Gastrocnemius medialis (tissue), 4 donors: ENCODE measurements at regions of chr3 and their contacts with region 1.

Region 1: DNA sequence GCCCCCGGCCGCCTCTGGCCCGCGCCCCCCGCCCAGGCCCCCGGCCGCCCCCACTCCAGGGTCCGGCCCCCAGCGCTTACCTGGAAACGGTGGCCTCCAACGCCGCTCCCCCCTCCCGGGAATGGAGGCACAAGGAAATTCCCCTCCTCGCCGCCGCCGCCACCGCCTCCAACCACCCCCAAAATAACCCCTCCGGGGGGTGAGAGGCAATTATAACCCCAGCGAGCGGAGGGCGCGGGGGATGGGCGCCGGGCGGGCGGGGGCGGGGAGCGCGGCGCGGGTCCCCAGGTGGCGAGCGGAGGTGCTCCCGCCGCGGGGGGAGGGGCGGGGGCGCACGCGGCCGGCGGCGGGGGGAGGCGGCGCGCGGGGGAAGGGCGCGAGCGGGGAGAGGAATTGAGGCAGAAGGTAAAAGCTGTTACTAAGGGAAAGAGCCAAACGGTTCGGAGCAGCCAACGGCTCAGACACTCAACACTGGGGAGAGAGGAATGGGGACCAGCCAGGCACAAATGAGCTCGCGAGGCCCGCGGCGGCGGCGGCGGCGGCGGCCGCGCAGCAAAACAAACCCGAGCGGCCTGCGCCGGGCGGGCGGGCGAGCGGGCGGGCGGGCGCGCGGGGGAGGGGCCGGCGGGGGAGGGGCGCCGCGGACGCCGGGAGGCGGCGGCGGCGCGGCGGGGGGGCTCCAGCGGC is at the start of gene TBL1XR1:
- DNase-seq: peak; percentile 91 to 96
- ATAC-seq: peak; percentile 90 to 92
- H3K4me3 ChIP-seq: peak within 1 kb of the TSS; percentile 72 to 92 (median 84)
- H3K27ac ChIP-seq: peak within 1 kb of the TSS; percentile 94 to 98 (median 96)
- H3K4me1 ChIP-seq: peaks cover 17 to 20% of the 10 kb centered on the region in 2 donors
- H3K27me3 ChIP-seq: no peaks in the 10 kb centered on the region
- CTCF ChIP-seq: no peak
- POLR2A ChIP-seq: peak in 1 of 2 donors; percentile 30
- total RNA-seq, gene TBL1XR1: 35.9 to 77.8 (median 49.2) TPM

Region 2: DNA sequence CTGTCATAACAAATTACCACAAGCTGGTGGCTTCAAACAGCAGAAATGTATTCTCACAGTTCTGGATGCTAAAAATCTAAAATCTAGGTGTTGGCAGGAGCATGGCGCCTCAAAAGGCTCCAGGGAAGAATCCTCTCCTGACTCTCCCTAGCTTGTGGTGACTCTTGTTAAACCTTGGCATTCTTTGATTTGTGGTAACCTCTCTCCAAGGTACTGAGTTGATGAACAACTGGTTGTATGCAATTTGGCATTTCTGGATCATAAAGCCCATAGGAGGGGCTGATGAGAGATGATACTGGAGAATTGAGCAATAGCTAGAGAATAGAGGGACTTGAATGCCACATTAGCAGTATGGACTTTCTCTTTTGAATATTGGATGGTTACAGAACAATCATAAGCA is 821.7 kb before region 1 on chr3:
- in situ Hi-C with region 1: no loop called
- intact Hi-C with region 1: no loop called
- DNase-seq: no peak
- ATAC-seq: no peak
- H3K4me3 ChIP-seq: no peak overlapping the region
- H3K27ac ChIP-seq: no peak overlapping the region
- H3K4me1 ChIP-seq: no peaks in the 10 kb centered on the region
- H3K27me3 ChIP-seq: no peaks in the 10 kb centered on the region
- CTCF ChIP-seq: no peak
- POLR2A ChIP-seq: no peak

Region 3: DNA sequence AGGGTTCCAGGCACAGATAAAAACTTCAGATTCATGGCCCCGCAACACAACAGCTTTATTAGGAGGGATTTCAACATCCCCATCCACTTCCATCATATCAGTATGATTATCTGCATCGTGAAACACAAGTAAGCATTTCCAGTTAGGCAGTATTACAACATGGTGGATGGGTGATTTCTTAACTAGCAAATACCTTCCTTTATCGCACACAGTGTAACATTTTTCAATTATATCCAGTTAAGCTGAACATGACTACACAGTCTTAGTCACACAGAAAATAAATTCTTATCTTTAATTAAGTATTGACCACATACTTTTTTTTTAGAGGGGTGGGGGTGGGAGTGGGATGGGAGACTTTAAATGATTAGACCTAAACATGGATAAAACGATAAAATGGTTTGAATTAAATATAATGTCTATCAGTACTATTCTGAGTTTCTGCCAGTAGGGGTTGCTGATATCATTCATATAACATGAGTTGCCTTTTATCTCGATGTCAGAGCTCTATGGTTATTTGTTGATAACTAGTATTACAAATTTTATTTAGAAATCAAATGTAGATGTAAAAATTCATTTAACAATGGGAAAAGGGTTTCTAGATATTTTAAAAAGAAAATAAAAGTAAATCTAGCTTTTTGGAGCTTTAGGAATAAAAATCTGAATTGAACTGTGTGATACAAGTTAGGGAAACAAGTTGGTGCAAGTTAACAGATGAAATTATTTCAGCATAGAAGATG is 146.5 kb before region 1 on chr3:
- in situ Hi-C with region 1: loop called in 3 of 4 experiments (anchors 5 to 25 kb)
- intact Hi-C with region 1: loop called (anchors 5 kb)
- DNase-seq: no peak
- ATAC-seq: peak in 1 of 2 donors; percentile 84
- H3K4me3 ChIP-seq: no peak overlapping the region
- H3K27ac ChIP-seq: peak overlapping the region in 1 of 4 donors; percentile 3
- H3K4me1 ChIP-seq: peaks cover 6 to 11% of the 10 kb centered on the region in 2 donors
- H3K27me3 ChIP-seq: no peaks in the 10 kb centered on the region
- CTCF ChIP-seq: peak; percentile 50 to 71 (median 57)
- POLR2A ChIP-seq: no peak

Region 4: GRCh38 chr3:177294221-177294620 is 97.0 kb after region 1 on chr3:
- in situ Hi-C with region 1: no loop called
- intact Hi-C with region 1: loop called (anchors 2 kb)
- DNase-seq: peak; percentile 82 to 85
- ATAC-seq: peak; percentile 99 to 100
- H3K4me3 ChIP-seq: no peak overlapping the region
- H3K27ac ChIP-seq: peak overlapping the region; percentile 69 to 91 (median 80)
- H3K4me1 ChIP-seq: peaks cover 22 to 31% of the 10 kb centered on the region in 2 donors
- H3K27me3 ChIP-seq: no peaks in the 10 kb centered on the region
- CTCF ChIP-seq: no peak
- POLR2A ChIP-seq: no peak

Region 5: GRCh38 chr3:177724020-177724638 is 526.9 kb after region 1 on chr3:
- in situ Hi-C with region 1: no loop called
- intact Hi-C with region 1: loop called (anchors 2 kb)
- DNase-seq: peak; percentile 94
- ATAC-seq: peak; percentile 93 to 97
- H3K4me3 ChIP-seq: no peak overlapping the region
- H3K27ac ChIP-seq: peak overlapping the region; percentile 84 to 87 (median 86)
- H3K4me1 ChIP-seq: peaks cover 46 to 60% of the 10 kb centered on the region in 2 donors
- H3K27me3 ChIP-seq: no peaks in the 10 kb centered on the region
- CTCF ChIP-seq: no peak
- POLR2A ChIP-seq: peak in 1 of 2 donors; percentile 59

Region 6: DNA sequence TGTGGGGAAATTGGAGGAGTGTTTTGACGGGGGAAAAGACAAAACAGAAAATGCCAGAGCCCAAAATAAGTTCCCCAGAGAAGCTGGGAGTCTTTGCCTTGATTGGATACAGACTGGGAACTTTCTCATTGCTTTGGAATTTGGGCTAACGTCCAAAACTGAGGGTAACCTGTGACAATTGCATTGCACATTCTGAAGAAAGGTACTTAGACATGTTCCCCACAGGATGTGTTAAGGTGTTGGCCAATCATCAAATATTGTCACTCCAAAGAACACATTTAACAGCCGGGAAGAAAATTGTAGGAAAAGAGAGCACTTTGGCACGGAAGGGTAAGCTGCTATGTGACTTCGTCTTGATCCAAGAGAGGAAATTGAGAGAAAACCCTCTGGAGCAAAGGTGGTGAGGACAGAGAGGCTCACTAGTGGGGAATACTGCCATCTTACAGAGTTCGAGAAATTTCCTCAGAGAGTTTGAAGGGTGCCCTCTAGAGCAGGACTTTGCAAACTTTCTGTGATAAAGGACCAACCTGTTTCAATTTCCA is 619.6 kb after region 1 on chr3:
- in situ Hi-C with region 1: no loop called
- intact Hi-C with region 1: loop called (anchors 10 kb)
- DNase-seq: no peak
- ATAC-seq: peak; percentile 57 to 83
- H3K4me3 ChIP-seq: no peak overlapping the region
- H3K27ac ChIP-seq: peak overlapping the region; percentile 18 to 64 (median 54)
- H3K4me1 ChIP-seq: peaks cover 19 to 36% of the 10 kb centered on the region in 2 donors
- H3K27me3 ChIP-seq: no peaks in the 10 kb centered on the region
- CTCF ChIP-seq: peak in 1 of 5 experiments; percentile 11
- POLR2A ChIP-seq: no peak